A673 (cell line): ENCODE measurements at regions of chr10 and their contacts with region 1.

Region 1: GRCh38 chr10:13556676-13557319 is 28.0 kb upstream of the BEND7 start:
- DNase-seq: peak; percentile 80
- H3K4me3 ChIP-seq: no peak overlapping the region
- H3K27ac ChIP-seq: peak overlapping the region; percentile 4
- H3K4me1 ChIP-seq: peaks cover 14% of the 10 kb centered on the region
- H3K27me3 ChIP-seq: no peaks in the 10 kb centered on the region
- CTCF ChIP-seq: no peak

Region 2: DNA sequence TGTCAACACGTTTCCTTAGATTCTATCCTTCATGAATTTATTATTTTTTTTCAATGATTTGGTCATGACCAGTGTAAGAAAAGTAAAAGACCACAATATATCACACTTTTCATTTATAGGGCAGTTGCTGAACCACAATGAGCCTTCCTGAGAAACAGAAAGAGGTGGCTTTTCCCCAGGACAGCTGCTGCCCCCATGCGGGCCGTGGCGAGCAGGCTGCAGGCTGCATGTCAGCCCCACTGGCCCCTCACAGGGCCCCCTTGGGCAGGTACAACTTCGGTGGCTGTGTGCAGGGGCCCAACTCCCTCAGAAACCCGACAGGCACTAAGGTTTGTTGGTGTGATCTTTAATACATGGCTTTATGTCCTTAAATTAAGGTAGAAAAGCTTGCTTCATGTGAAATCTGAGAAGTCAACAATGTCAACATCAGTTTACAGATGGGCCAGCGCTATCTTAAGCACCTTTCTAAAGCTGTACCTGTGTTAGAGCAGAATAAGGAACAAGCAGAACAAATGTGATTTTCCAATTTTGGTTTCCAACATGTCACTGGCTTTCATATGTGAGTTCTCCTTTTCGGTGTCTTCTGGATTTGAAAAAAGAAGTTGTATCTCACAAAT is 38.6 kb before region 1 on chr10:
- CTCF ChIA-PET with region 1: no interaction called
- POLR2A ChIA-PET with region 1: interaction called, 16 read pairs
- intact Hi-C with region 1: no loop called
- DNase-seq: no peak
- H3K4me3 ChIP-seq: no peak overlapping the region
- H3K27ac ChIP-seq: no peak overlapping the region
- H3K4me1 ChIP-seq: no peaks in the 10 kb centered on the region
- H3K27me3 ChIP-seq: no peaks in the 10 kb centered on the region
- CTCF ChIP-seq: no peak

Region 3: GRCh38 chr10:13853854-13854253 is 297.1 kb after region 1 on chr10:
- CTCF ChIA-PET with region 1: no interaction called
- POLR2A ChIA-PET with region 1: interaction called, 16 read pairs
- intact Hi-C with region 1: no loop called
- DNase-seq: no peak
- H3K4me3 ChIP-seq: no peak overlapping the region
- H3K27ac ChIP-seq: no peak overlapping the region
- H3K4me1 ChIP-seq: no peaks in the 10 kb centered on the region
- H3K27me3 ChIP-seq: peaks cover 6% of the 10 kb centered on the region
- CTCF ChIP-seq: no peak